ENCODE measurements at regions of chr6 and their contacts with region 1.

Region 1: DNA sequence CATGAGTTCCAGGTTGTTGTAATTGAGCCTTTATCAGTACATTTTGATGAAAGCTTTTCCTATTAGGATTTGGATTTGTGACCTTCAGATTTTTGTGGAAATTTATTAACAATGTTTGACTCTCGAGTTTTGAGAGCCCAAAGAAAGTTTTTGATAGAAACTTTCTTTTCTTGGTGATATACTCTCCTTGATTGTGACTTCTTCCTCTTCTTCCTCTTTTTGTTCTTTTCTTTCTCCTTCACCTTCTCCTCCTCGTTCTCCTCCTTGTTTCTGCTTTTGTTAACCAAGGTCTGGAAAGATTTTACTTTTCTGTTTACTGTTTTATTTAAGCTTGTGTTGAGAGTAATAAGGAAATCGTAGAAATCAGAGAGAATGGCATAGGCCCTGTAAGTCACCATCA is 182.4 kb downstream of the TRIM27 start:
- DNase-seq: no peak
- H3K4me3 ChIP-seq: no peak overlapping the region
- H3K27ac ChIP-seq: no peak overlapping the region
- H3K4me1 ChIP-seq: peaks cover 4% of the 10 kb centered on the region; the same call in 1 of the 2 replicates
- H3K27me3 ChIP-seq: no peaks in the 10 kb centered on the region
- CTCF ChIP-seq: no peak

Region 2: DNA sequence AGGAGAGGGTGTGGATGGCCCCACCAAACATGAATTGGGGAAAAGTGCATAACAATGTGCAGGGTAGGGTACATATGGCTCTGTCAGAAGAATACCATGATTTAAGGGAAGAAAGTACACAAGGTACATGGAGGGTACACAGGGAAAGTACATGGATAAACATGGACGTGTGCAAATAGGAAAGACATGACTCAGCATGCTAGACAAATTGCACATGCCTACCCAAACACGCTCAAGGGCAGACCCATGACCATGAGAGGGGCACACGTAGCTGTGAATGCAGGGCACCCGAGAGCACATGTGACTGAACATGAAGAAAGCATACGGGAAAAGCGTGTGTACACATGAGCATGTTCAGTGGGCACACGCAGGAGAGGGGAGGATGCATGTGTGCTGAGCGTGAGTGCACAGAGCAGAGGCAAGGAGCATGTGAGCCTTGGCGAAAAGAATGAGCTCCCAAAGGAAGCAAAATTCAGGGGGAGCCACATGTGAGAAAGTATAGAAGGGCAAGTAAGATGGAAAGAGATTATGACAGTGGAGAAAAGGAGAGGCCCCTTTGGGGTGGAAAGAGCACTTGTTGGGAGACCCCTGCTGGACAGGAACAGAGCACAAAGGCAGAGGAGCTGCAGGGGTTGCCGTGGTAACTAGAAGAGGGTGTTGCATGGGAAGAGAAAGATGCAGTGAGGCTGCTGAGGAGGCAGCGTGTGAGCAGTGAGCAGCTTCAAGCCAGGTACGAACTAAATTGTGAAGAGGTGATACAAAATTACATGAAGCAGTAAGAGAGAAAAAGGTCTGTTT is 861.4 kb after region 1 on chr6:
- CTCF ChIA-PET with region 1: interaction called, 11 read pairs
- POLR2A ChIA-PET with region 1: no interaction called
- intact Hi-C with region 1: no loop called
- DNase-seq: no peak
- H3K4me3 ChIP-seq: no peak overlapping the region
- H3K27ac ChIP-seq: no peak overlapping the region
- H3K4me1 ChIP-seq: no peaks in the 10 kb centered on the region
- H3K27me3 ChIP-seq: no peaks in the 10 kb centered on the region
- CTCF ChIP-seq: peak; percentile 22; the same call in 1 of the 2 replicates